Mammary epithelial cell (primary cell): ENCODE measurements at regions of chr5 and their contacts with region 1.

Region 1: DNA sequence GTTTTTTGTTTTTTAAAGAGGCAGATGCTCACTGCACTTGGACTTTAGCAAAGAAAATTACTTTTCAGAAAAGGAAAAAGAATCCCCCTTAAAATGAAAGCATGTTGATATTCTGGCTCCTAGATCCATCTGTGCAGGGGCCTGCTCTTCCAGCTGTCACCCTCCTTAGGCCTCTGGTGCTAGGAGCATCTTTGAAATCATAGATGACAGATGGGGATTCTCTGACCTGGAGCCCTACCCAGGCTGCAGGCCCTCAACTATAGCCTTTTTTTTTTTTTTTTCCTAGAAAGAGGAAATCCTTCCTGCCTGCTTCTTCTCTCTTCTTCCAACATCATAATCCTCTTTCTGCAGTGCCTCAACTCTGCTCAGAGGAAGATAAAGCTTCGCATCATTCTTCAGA is 16.3 kb upstream of the DCP2 start:
- DNase-seq: no peak
- H3K4me3 ChIP-seq: no peak overlapping the region
- H3K27ac ChIP-seq: no peak overlapping the region
- H3K4me1 ChIP-seq: peaks cover 22% of the 10 kb centered on the region
- H3K27me3 ChIP-seq: no peaks in the 10 kb centered on the region
- CTCF ChIP-seq: no peak

Region 2: DNA sequence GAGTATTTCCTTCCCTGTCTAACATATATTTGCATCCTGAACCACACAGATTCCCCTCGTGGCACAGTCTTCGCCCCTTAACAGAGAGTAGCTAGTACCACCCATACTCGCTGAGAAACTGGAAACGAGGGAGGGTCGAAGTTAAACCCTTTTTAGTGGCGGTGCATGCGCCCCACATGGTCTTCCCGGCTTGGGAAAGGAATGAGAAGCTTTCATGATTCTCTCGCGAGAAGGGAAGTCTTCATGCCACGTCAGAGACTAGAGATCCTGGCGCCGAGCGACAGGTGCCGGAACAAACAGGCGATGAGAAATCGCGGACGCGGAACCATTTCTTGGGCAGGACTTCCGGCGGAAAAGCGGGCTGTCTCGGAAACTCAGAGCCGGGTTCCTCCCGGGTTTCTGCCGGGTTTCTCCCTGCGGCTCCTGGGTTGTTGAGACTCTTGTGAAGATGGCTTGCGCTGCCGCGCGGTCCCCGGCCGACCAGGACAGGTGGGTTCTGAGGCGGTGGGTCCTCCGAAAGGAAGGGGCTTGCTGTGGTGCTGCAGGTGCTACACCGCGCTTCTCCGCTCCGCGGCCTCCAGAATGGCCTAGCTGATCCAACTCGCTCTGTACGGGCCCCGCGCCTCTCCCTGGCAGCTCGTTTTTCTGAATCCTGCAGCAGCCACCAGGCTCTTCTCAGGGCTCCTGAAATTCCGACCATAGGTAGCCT is 99.2 kb before region 1 on chr5 and contains the start of gene SRP19:
- CTCF ChIA-PET with region 1: no interaction called
- dilution Hi-C with region 1: no loop called
- in situ Hi-C with region 1: no loop called
- intact Hi-C with region 1: loop called (anchors 5 kb)
- DNase-seq: peak; percentile 96
- H3K4me3 ChIP-seq: peak within 1 kb of the TSS; percentile 73 to 100 (median 99)
- H3K27ac ChIP-seq: peak within 1 kb of the TSS; percentile 92
- H3K4me1 ChIP-seq: peaks cover 20% of the 10 kb centered on the region
- H3K27me3 ChIP-seq: no peaks in the 10 kb centered on the region
- CTCF ChIP-seq: no peak
- total RNA-seq, gene SRP19: 31.8 to 57.2 TPM

Region 3: GRCh38 chr5:112878760-112879159 is 81.6 kb before region 1 on chr5:
- CTCF ChIA-PET with region 1: no interaction called
- dilution Hi-C with region 1: no loop called
- in situ Hi-C with region 1: no loop called
- intact Hi-C with region 1: loop called (anchors 5 kb)
- DNase-seq: peak; percentile 77
- H3K4me3 ChIP-seq: no peak overlapping the region
- H3K27ac ChIP-seq: peak overlapping the region; percentile 35
- H3K4me1 ChIP-seq: peaks cover 12% of the 10 kb centered on the region
- H3K27me3 ChIP-seq: no peaks in the 10 kb centered on the region
- CTCF ChIP-seq: no peak